ENCODE measurements at regions of chr20 and their contacts with region 1.

Region 1: GRCh38 chr20:50070991-50071888 is 41.7 kb downstream of the UBE2V1 start:
- DNase-seq: peak; percentile 95
- H3K4me3 ChIP-seq: peak overlapping the region in 1 of 2 donors; percentile 52
- H3K27ac ChIP-seq: no peak overlapping the region
- H3K4me1 ChIP-seq: no peaks in the 10 kb centered on the region
- H3K27me3 ChIP-seq: no peaks in the 10 kb centered on the region
- CTCF ChIP-seq: peak; percentile 99 to 100 (median 100)
- POLR2A ChIP-seq: no peak

Region 2: GRCh38 chr20:49982346-49983122 is 88.7 kb before region 1 on chr20 and contains the start of gene SNAI1:
- intact Hi-C with region 1: loop called (anchors 5 kb)
- DNase-seq: peak; percentile 85
- H3K4me3 ChIP-seq: peak within 1 kb of the TSS; percentile 61 to 70
- H3K27ac ChIP-seq: peak within 1 kb of the TSS; percentile 48 to 76
- H3K4me1 ChIP-seq: peaks cover 26% of the 10 kb centered on the region
- H3K27me3 ChIP-seq: no peaks in the 10 kb centered on the region
- CTCF ChIP-seq: peak; percentile 33 to 51 (median 50)
- POLR2A ChIP-seq: no peak
- total RNA-seq, gene SNAI1: 7.0 to 7.6 TPM

Region 3: DNA sequence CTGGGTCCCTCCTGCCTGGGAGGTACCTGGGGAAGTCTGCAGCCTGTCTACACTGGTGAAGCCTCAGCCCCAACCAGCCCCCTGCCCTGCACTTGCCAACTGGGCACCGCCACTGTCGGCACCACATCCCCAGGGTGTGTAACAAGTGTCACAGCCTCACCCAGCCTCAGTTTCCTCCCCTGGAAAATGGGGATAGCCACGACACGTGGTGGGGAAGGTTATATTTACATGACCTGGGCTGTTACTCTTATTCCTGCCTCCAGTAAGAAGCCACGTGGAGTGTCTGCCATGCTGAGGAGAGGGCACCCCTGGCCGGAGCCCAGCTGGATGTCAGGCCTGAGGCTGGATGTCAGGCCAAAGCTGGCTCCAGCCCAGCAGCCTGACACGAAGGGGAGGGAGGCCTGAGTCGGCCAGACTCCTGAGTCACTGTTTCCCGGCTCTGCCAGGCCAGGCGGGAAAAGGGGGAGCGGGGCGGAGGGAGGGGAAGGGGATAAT is 43.6 kb before region 1 on chr20:
- intact Hi-C with region 1: no loop called
- DNase-seq: no peak
- H3K4me3 ChIP-seq: no peak overlapping the region
- H3K27ac ChIP-seq: no peak overlapping the region
- H3K4me1 ChIP-seq: peaks cover 3% of the 10 kb centered on the region
- H3K27me3 ChIP-seq: no peaks in the 10 kb centered on the region
- CTCF ChIP-seq: no peak
- POLR2A ChIP-seq: no peak